ENCODE measurements at regions of chr17 and their contacts with region 1.

Region 1: GRCh38 chr17:59753522-59754467 is 46.3 kb downstream of the VMP1 start:
- DNase-seq: peak in 1 of 2 experiments; percentile 79
- H3K4me3 ChIP-seq: peak overlapping the region; percentile 45
- H3K27ac ChIP-seq: peak overlapping the region; percentile 99
- H3K4me1 ChIP-seq: peaks cover 59% of the 10 kb centered on the region
- H3K27me3 ChIP-seq: no peaks in the 10 kb centered on the region
- CTCF ChIP-seq: peak; percentile 93

Region 2: GRCh38 chr17:59763861-59764260 is 10.1 kb after region 1 on chr17:
- CTCF ChIA-PET with region 1: no interaction called
- POLR2A ChIA-PET with region 1: interaction called, 9 read pairs
- intact Hi-C with region 1: loop called (anchors 1 kb)
- DNase-seq: peak in 1 of 2 experiments; percentile 63
- H3K4me3 ChIP-seq: no peak overlapping the region
- H3K27ac ChIP-seq: peak overlapping the region; percentile 72
- H3K4me1 ChIP-seq: peaks cover 43% of the 10 kb centered on the region
- H3K27me3 ChIP-seq: no peaks in the 10 kb centered on the region
- CTCF ChIP-seq: no peak

Region 3: GRCh38 chr17:59837308-59838051 is 83.7 kb after region 1 on chr17:
- CTCF ChIA-PET with region 1: interaction called, 3 read pairs
- POLR2A ChIA-PET with region 1: interaction called, 41 read pairs
- intact Hi-C with region 1: loop called (anchors 1 kb)
- DNase-seq: peak; percentile 75 to 100
- H3K4me3 ChIP-seq: peak overlapping the region; percentile 88
- H3K27ac ChIP-seq: peak overlapping the region; percentile 99
- H3K4me1 ChIP-seq: peaks cover 55% of the 10 kb centered on the region
- H3K27me3 ChIP-seq: no peaks in the 10 kb centered on the region
- CTCF ChIP-seq: no peak

Region 4: DNA sequence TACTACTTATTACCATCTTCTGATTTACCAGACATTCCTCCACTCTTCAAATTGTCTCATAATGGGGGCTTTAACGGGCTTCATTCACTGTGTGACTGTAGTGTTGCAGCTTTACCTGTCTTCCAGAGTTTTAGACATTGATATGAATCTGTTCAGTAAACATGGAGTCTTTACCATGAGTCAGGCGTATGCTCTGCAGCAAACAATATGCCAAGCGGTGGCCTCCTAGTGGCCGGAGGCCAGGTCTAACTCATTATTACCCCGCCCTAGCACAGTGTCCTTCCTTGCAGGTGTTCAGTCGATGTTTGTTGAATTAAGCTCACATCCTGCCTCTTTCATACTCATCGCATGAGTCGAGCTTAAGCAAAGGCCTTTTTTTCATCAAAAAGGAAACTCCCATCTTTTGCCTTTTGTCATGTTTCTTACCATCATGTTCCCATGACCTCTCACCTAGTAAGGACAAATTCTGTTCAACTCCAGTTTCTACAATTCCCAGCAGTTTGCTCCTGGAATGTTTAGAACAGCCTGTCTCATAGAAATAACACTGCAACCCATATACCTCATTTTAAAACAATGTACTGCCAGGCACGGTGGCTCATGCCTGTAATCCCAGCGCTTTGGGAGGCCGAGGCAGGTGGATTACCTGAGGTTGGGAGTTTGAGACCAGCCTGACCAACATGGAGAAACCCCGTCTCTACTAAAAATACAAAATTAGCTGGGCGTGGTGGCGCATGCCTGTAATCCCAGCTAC is 99.5 kb after region 1 on chr17:
- CTCF ChIA-PET with region 1: interaction called, 28 read pairs
- POLR2A ChIA-PET with region 1: interaction called, 22 read pairs
- intact Hi-C with region 1: no loop called
- DNase-seq: peak; percentile 92 to 100
- H3K4me3 ChIP-seq: peak overlapping the region; percentile 12; the same call in 1 of the 2 replicates
- H3K27ac ChIP-seq: peak overlapping the region; percentile 98
- H3K4me1 ChIP-seq: peaks cover 91% of the 10 kb centered on the region
- H3K27me3 ChIP-seq: no peaks in the 10 kb centered on the region
- CTCF ChIP-seq: peak; percentile 83

Region 5: DNA sequence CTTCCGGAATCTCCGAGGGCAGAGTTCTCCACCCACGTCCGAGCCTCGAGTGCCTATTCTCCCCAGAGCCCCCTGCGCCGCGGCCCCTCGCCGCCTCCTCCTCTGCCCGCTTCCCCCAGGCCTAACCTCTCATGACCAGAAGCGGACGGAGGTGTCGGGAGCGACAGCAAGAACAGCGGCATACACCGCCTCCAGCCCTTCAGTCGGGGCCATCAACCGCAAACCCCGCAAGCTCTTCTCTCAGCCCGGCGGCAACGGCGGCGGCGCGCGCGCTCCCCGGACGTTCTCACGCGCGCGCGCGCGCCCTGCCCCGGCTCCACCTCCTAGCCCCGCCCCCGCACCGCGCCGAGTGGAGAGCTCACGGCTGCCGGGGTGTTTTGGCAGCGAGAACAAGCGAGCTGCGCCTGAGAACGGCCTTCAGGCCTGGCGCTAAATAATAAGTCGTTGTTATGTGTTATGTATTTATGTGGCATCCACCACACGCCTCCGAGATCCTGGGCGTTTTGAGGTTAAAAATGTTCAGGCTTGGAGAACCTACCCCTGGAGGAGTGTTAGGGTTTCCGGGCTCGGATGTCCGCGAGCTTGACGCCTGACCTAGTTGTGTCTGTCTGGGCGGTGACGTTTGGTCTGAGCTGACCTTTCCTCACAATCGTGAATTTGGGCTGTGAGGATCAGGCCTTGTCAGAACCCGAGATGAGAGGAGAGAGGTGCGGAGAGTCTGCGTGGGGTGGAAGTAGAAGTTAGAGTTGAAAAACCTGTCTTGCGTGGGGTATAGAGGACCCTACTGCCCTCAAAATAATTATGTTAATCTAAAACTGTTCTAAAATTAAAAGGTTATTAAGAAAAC is 210.9 kb after region 1 on chr17 and contains the start of gene RNFT1:
- CTCF ChIA-PET with region 1: interaction called, 6 read pairs
- POLR2A ChIA-PET with region 1: interaction called, 35 read pairs
- intact Hi-C with region 1: no loop called
- DNase-seq: peak; percentile 77 to 83
- H3K4me3 ChIP-seq: peak within 1 kb of the TSS; percentile 82
- H3K27ac ChIP-seq: peak within 1 kb of the TSS; percentile 71
- H3K4me1 ChIP-seq: peaks cover 19% of the 10 kb centered on the region
- H3K27me3 ChIP-seq: no peaks in the 10 kb centered on the region
- CTCF ChIP-seq: no peak
- total RNA-seq, gene RNFT1: 19.9 and 24.7 TPM in 2 replicates